ENCODE measurements at regions of chr20 and their contacts with region 1.

Region 1: GRCh38 chr20:4613718-4614620 is 107.7 kb upstream of the PRND start:
- DNase-seq: peak in 9 of 10 donors; percentile 39 to 93 (median 73)

Region 2: DNA sequence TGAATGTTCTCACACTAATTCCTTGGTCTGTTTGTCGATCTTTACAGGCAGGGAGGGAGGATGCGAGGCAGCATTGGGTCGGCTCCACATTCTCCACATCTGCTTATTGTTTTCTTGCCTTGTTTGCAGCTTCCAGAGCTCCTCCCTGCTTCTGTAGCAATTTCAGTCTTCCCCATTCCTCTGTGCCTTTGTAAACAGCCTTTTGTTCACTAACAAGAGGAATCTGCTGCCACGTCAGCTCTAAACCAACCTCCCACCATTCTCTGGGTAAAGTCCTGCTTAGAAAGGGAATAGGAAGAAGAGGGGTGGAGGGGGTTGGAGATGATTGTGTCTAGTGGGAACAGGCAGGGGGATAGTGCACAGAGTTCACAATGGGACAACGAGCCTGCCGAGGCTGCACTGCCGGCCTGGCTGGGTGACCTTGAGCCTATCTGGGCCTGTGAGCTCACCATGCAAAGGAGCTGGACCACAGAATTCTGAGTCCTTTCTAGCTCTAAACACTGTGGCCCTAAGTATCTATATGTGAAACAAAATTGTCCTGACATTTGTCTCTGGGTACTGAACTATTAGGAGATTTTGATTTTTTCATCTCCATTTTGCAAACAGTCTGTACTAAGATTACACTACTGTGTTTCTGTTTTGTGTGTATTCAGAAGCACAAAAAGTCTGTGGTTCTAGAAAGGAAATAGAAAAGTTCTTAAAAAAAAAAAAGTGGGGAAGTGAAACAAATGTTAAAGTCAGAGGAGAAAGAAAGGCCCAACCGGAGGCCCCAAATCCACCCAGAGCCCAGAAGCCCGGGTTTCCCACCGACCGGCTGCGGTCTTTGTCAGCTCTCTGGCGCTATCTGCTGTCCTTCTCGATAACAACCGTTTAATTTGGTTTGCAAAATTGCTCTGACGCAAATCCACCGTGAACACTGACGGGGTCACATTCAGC is 106.3 kb after region 1 on chr20:
- intact Hi-C with region 1: loop called (anchors 1 kb)
- DNase-seq: peak; percentile 67 to 97 (median 83)

Region 3: GRCh38 chr20:5072756-5073659 is 459.0 kb after region 1 on chr20:
- intact Hi-C with region 1: no loop called
- DNase-seq: peak in 8 of 10 donors; percentile 21 to 92 (median 44)

Measured in posterior cingulate gyrus (tissue), 11 donors.